ENCODE measurements at regions of chr14 and their contacts with region 1.

Region 1: GRCh38 chr14:101964297-101965144 is at the start of gene DYNC1H1:
- DNase-seq: peak; percentile 86
- H3K4me3 Mint-ChIP-seq: peak within 1 kb of the TSS; percentile 89
- H3K27ac Mint-ChIP-seq: peak within 1 kb of the TSS; percentile 71
- H3K4me1 Mint-ChIP-seq: peaks cover 39% of the 10 kb centered on the region
- H3K27me3 Mint-ChIP-seq: no peaks in the 10 kb centered on the region
- total RNA-seq, gene DYNC1H1: 207 to 208 TPM

Region 2: GRCh38 chr14:101947906-101948665 is 16.4 kb before region 1 on chr14:
- CTCF ChIA-PET with region 1: interaction called, 5 read pairs
- intact Hi-C with region 1: loop called (anchors 1 kb)
- DNase-seq: peak; percentile 100
- H3K4me3 Mint-ChIP-seq: peak overlapping the region; percentile 98
- H3K27ac Mint-ChIP-seq: peak overlapping the region; percentile 97
- H3K4me1 Mint-ChIP-seq: peaks cover 18% of the 10 kb centered on the region
- H3K27me3 Mint-ChIP-seq: peaks cover 20% of the 10 kb centered on the region

Region 3: GRCh38 chr14:102086972-102087761 is 122.6 kb after region 1 on chr14 and contains the start of gene HSP90AA1:
- CTCF ChIA-PET with region 1: interaction called, 3 read pairs
- intact Hi-C with region 1: loop called (anchors 1 kb)
- DNase-seq: peak; percentile 92
- H3K4me3 Mint-ChIP-seq: peak within 1 kb of the TSS; percentile 97
- H3K27ac Mint-ChIP-seq: peak within 1 kb of the TSS; percentile 95
- H3K4me1 Mint-ChIP-seq: peaks cover 49% of the 10 kb centered on the region
- H3K27me3 Mint-ChIP-seq: no peaks in the 10 kb centered on the region
- total RNA-seq, gene HSP90AA1: 1,286 to 1,366 TPM

Region 4: GRCh38 chr14:102139248-102140026 is 174.9 kb after region 1 on chr14 and contains the start of gene WDR20:
- CTCF ChIA-PET with region 1: no interaction called
- intact Hi-C with region 1: loop called (anchors 2 kb)
- DNase-seq: peak; percentile 99
- H3K4me3 Mint-ChIP-seq: peak within 1 kb of the TSS; percentile 95
- H3K27ac Mint-ChIP-seq: peak within 1 kb of the TSS; percentile 94
- H3K4me1 Mint-ChIP-seq: peaks cover 24% of the 10 kb centered on the region
- H3K27me3 Mint-ChIP-seq: no peaks in the 10 kb centered on the region
- total RNA-seq, gene WDR20: 20.5 to 21.4 TPM

Region 5: GRCh38 chr14:102437997-102438915 is 473.7 kb after region 1 on chr14:
- CTCF ChIA-PET with region 1: no interaction called
- intact Hi-C with region 1: loop called (anchors 5 kb)
- DNase-seq: peak; percentile 71
- H3K4me3 Mint-ChIP-seq: peak overlapping the region; percentile 39
- H3K27ac Mint-ChIP-seq: no peak overlapping the region
- H3K4me1 Mint-ChIP-seq: peaks cover 4% of the 10 kb centered on the region
- H3K27me3 Mint-ChIP-seq: no peaks in the 10 kb centered on the region

Region 6: GRCh38 chr14:102591889-102592763 is 627.6 kb after region 1 on chr14 and contains the start of gene RCOR1:
- CTCF ChIA-PET with region 1: interaction called, 3 read pairs
- intact Hi-C with region 1: loop called (anchors 10 kb)
- DNase-seq: peak; percentile 98
- H3K4me3 Mint-ChIP-seq: peak within 1 kb of the TSS; percentile 85
- H3K27ac Mint-ChIP-seq: peak within 1 kb of the TSS; percentile 91
- H3K4me1 Mint-ChIP-seq: peaks cover 31% of the 10 kb centered on the region
- H3K27me3 Mint-ChIP-seq: no peaks in the 10 kb centered on the region
- total RNA-seq, gene RCOR1: 11.9 to 12.2 TPM

Region 7: DNA sequence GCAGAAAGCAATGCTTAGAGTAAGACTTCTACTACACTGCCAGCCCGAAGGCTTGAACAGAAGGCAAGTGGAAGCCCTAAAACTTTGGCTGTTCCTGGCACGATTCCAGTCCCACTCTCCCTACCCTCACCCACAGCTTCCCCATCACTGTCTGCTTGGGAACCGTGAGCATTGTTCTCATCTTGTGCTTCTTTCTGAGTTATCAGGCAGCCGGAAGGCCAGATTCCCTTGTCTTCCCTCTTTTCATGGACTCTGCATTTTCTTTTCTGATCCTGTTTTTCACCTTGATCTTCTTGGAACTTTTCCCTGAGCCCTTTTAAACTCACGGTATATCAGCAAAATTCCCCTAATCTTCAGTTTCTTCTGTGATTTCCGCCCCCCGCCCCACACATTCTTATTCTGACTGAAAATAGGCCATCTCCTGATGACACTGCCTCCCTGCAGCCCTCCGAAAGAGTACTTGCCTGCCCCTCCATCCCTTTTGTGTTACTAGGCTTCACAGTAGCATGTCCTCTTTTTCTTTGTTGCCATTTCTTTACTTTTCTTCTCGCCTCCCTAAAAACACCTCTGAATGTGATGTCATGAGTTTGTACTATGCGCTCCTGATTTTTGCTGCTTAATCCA is 657.9 kb after region 1 on chr14:
- CTCF ChIA-PET with region 1: no interaction called
- intact Hi-C with region 1: no loop called
- DNase-seq: peak; percentile 33
- H3K4me3 Mint-ChIP-seq: no peak overlapping the region
- H3K27ac Mint-ChIP-seq: no peak overlapping the region
- H3K4me1 Mint-ChIP-seq: peaks cover 48% of the 10 kb centered on the region
- H3K27me3 Mint-ChIP-seq: no peaks in the 10 kb centered on the region